Lower leg skin (tissue), 4 donors: ENCODE measurements at regions of chr2 and their contacts with region 1.

Region 1: DNA sequence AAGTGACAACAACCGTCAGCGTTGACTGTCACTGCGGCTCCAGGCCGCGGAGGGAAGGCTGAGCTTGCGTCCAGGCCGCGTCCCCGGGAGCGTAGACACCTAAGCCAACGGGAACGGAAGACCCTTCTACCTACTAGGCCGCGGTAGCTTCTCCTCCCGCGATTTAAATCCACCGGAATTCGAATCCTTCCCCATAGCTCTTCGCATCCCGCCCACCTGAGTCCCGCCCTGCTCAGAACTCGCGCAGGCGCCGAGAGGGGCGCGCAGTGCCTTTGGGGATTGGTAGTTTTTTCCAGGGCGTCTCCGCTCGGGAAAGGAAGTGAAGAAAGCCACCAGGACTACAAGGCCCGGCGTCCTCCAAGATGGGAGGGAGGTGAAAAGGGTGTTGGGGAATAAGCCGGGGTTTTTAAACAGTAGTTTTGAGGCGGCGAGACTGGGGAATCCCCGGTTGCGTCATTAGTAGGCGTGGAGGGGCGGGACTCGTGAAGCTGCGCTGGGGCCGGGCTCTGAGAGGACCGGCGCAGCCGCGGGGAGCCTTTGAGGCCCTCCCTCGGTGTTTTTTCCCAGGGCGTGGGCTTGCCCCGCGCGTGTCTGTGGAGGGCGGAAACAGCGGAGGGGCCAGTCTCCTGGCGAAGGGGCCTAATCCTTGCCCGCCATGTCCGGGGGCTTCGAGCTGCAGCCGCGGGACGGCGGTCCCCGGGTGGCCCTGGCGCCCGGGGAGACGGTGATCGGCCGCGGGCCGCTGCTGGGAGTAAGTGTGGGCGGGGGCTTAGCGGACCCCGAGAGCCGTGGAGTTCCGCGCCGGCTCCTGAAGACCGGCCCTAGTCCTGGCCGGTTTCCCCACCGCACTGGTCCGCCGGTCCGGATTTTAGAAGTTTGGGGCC is at the starts of genes APLF and FBXO48:
- DNase-seq: peak; percentile 99
- H3K4me3 ChIP-seq: peak within 1 kb of the TSS; percentile 68
- CTCF ChIP-seq: no peak
- POLR2A ChIP-seq: no peak
- total RNA-seq, gene APLF: 7.5 to 12.9 (median 9.5) TPM
- total RNA-seq, gene FBXO48: 0.98 to 2.2 (median 1.7) TPM

Region 2: GRCh38 chr2:68726608-68727367 is 259.5 kb after region 1 on chr2:
- intact Hi-C with region 1: loop called (anchors 10 kb)
- DNase-seq: no peak
- H3K4me3 ChIP-seq: no peak overlapping the region
- CTCF ChIP-seq: no peak
- POLR2A ChIP-seq: no peak

Region 3: DNA sequence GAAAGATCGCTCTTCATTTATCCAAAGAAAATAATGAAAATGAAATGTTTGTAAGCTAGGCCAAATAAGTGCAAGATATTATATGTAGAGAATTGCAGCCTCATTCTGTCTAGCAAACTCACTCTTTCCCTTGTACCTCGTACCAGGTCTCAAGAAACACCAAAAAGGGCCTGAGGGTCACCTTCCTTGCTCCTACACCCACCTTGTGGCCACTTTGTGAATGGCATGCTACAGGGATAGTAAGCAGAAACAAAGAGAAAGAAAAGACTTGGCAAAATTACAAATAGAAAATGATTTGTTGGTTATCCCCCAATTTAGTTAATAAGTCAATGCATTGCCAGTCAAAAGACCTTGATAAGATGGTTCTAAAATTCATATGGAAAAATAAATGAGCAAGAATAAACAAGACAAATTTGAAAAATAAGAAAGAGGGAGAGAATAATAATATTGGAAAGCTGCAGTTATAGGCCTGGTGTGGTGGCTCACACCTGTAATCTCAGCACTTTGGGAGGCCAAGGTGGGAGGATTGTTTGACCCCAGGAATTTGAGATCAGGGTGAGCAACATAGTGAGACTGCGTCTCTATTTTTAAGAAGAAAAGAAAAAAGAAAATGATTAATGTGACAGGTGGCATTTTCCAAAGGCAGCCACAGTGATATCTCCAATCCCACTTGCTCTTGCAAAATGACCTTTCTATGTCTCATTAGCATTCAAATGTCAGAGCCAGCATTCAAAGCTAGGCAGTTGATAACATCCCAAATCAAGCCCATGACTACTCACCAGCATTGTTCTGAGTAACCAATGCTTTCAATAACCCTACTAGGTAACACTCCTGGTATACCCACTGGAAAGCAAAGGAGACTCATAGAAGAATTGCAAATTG is 442.7 kb after region 1 on chr2:
- intact Hi-C with region 1: loop called (anchors 10 kb)
- DNase-seq: peak in 1 of 2 donors; percentile 66
- H3K4me3 ChIP-seq: no peak overlapping the region
- CTCF ChIP-seq: peak in 2 of 3 donors; percentile 62 to 75
- POLR2A ChIP-seq: no peak

Region 4: DNA sequence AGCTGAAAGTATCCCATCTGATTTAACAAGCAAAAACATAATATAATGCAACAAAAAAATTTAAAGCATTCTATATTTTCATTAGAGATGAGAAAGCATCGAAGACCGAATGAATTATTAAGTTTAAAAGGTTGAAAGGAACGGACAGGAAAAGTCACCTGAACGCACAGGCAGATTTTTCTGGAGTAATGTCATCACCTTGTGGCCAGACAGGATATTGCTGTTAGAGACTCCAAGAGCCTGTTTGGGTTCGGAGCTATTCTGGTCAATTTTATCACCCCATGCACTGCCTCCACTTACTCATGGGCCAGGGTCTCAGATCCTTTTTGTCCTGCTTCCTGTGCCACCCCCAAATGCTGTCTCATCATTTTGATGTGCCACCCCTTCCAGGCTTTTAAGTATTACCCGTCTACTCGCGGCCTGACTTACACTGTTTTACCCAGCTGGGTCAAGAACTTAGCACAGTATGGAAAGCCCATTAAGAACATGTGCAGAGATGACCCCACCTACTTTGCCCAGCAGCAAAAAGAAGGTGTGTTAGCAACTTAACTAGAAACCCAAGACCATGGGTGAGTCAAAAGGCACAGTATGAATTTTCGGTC is 458.1 kb after region 1 on chr2:
- intact Hi-C with region 1: loop called (anchors 10 kb)
- DNase-seq: no peak
- H3K4me3 ChIP-seq: no peak overlapping the region
- CTCF ChIP-seq: peak in 1 of 3 donors; percentile 77
- POLR2A ChIP-seq: no peak